ENCODE measurements at regions of chr5 and their contacts with region 1.

Region 1: DNA sequence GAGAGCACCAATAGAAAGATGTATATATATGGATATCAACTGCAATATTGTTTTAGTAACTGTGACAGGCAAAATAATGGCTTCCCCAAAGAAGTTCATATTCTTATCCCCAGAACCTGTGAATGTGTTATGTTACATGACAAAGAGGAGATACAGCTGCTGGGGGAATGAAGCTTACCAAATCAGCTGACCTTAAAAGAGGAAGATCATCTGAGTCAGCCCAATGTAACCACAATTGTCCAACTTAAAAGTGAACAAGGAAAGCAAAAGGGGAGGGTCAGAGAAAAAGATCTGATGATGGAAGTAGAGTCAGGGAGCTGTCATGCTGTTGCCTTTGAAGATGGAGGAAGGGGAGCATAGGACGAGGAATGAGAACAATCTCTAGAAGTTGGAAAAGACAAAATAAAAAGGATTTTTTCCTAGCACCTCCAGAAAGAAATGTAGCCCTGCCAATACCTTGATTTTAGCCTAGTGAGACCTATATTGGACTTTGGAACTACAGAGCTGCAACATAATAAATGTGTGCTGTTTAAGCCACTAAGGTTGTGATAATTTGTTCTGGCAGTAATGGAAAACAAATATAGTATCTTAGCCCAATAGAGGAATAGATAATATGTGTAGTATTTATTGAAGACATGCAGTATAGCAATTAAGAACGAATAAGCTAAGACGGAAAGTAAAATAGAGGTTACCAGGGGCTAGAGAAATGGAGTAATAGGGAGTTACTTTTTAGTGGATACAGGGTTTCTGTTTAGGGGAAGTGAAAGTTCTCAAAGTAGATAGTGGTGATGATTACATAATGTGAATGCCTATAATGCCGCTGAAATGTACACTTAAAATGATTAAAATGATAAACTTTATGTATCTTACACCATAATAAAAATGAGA is 115.9 kb downstream of the PIK3R1 start:
- DNase-seq: no peak
- H3K4me3 ChIP-seq: no peak overlapping the region
- H3K27ac ChIP-seq: peak overlapping the region; percentile 56
- H3K4me1 ChIP-seq: peaks cover 41% of the 10 kb centered on the region
- H3K27me3 ChIP-seq: no peaks in the 10 kb centered on the region
- CTCF ChIP-seq: no peak
- POLR2A ChIP-seq: no peak

Region 2: GRCh38 chr5:68246802-68247201 is 84.6 kb before region 1 on chr5:
- CTCF ChIA-PET with region 1: no interaction called
- POLR2A ChIA-PET with region 1: no interaction called
- dilution Hi-C with region 1: no loop called
- intact Hi-C with region 1: no loop called
- DNase-seq: no peak
- H3K4me3 ChIP-seq: no peak overlapping the region
- H3K27ac ChIP-seq: no peak overlapping the region
- H3K4me1 ChIP-seq: peaks cover 81% of the 10 kb centered on the region
- H3K27me3 ChIP-seq: no peaks in the 10 kb centered on the region
- CTCF ChIP-seq: no peak
- POLR2A ChIP-seq: no peak

Region 3: DNA sequence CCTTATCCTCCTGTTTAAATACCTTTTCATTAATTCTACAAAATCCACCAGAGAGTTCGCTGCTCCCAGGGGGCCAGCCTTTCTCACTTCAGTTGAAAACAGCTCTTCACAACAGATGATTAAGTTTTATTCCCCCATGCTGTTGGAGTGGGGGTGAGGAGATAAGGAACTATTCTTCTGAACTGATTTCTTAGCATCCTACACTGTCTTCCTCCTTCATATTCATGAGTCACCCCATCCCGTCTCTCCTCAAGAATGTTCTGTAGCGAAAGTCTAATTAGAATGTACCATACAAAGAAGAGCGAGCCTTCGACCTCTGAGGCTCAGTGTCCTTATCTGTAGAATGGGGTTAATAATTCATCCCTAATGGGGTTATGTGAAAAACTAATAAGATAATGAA is 22.2 kb after region 1 on chr5:
- CTCF ChIA-PET with region 1: no interaction called
- POLR2A ChIA-PET with region 1: no interaction called
- dilution Hi-C with region 1: no loop called
- intact Hi-C with region 1: loop called (anchors 2 kb)
- DNase-seq: no peak
- H3K4me3 ChIP-seq: no peak overlapping the region
- H3K27ac ChIP-seq: no peak overlapping the region
- H3K4me1 ChIP-seq: peaks cover 21% of the 10 kb centered on the region
- H3K27me3 ChIP-seq: no peaks in the 10 kb centered on the region
- CTCF ChIP-seq: no peak
- POLR2A ChIP-seq: no peak

Region 4: GRCh38 chr5:68433923-68434879 is 102.8 kb after region 1 on chr5:
- CTCF ChIA-PET with region 1: no interaction called
- POLR2A ChIA-PET with region 1: no interaction called
- dilution Hi-C with region 1: no loop called
- intact Hi-C with region 1: loop called (anchors 1 kb)
- DNase-seq: peak; percentile 93
- H3K4me3 ChIP-seq: no peak overlapping the region
- H3K27ac ChIP-seq: peak overlapping the region; percentile 75
- H3K4me1 ChIP-seq: peaks cover 15% of the 10 kb centered on the region
- H3K27me3 ChIP-seq: no peaks in the 10 kb centered on the region
- CTCF ChIP-seq: no peak
- POLR2A ChIP-seq: no peak

Region 5: GRCh38 chr5:68460147-68460798 is 128.8 kb after region 1 on chr5:
- CTCF ChIA-PET with region 1: no interaction called
- POLR2A ChIA-PET with region 1: no interaction called
- dilution Hi-C with region 1: no loop called
- intact Hi-C with region 1: loop called (anchors 2 kb)
- DNase-seq: peak; percentile 76
- H3K4me3 ChIP-seq: no peak overlapping the region
- H3K27ac ChIP-seq: no peak overlapping the region
- H3K4me1 ChIP-seq: peaks cover 4% of the 10 kb centered on the region
- H3K27me3 ChIP-seq: peaks cover 2 to 10% of the 10 kb centered on the region in 2 experiments
- CTCF ChIP-seq: peak; percentile 51 to 55
- POLR2A ChIP-seq: no peak